IMR-90 (cell line): ENCODE measurements at regions of chr12 and their contacts with region 1.

Region 1: DNA sequence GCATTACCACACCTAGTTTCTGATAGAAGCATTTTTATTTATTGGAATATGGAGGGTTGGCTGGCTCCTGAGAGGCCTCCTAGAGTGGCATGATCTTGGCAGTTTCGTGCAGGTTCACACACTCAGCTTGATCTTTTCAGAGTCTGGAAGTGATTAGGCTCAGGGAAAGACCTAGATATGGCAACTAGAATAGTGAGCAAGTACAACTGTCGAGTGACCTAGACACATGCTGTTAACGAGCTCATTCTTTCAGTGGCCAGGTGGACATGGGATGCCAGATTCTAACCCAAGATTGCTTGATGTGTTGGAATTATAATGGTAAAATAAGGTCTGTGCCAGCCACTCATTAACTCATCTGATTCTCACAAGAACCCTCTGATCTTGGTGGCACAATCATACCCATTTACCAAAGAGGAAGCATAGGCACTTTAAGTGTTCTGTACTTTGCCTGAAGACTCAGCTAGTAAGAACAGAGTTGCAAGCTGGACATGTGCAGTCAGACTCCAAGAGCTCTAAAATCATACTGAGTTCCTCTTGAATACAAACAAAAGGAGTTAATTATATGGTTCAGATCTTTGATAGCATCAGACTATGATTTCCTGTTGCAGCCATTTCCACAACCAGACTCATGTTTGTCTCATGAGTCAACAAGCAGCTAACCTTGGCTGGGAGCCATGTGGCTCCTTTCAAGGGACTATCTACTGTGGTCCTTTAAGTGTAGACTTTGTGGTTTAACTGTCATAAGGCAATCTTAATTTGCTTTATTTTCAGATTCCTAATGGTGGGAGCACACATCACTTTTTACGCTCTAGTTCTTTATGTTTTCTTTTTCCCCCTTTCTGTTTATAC is 144.2 kb downstream of the PLEKHA5 start:
- DNase-seq: peak; percentile 97
- ATAC-seq: peak; percentile 91
- H3K4me3 ChIP-seq: no peak overlapping the region
- H3K27ac ChIP-seq: peak overlapping the region; percentile 13
- H3K4me1 ChIP-seq: peaks cover 5% of the 10 kb centered on the region; the same call in 1 of the 2 replicates
- H3K27me3 ChIP-seq: no peaks in the 10 kb centered on the region
- CTCF ChIP-seq: no peak
- POLR2A ChIP-seq: no peak
- RAD21 ChIP-seq: no peak

Region 2: DNA sequence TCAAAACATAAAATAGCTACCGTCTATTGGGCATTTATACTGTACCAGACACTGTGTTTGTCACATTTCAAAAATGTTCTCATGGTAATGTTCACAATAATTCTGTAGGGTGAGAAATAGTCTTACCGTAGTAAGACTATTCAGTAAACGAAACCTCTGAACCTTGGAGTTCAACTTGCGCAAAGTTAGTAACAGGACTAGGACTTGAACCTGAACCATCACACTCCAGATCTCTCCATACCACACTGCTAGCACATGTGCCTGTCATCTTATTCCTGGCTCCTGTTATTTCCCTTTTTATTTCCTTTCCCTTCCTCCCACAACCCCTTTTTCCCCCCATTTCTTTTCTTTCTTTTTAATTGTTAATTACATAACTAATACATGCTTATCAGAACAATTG is 78.7 kb before region 1 on chr12:
- CTCF ChIA-PET with region 1: interaction called, 13 read pairs
- POLR2A ChIA-PET with region 1: no interaction called
- dilution Hi-C with region 1: no loop called
- in situ Hi-C with region 1: no loop called
- intact Hi-C with region 1: no loop called
- DNase-seq: no peak
- ATAC-seq: no peak
- H3K4me3 ChIP-seq: no peak overlapping the region
- H3K27ac ChIP-seq: no peak overlapping the region
- H3K4me1 ChIP-seq: peaks cover 12% of the 10 kb centered on the region
- H3K27me3 ChIP-seq: no peaks in the 10 kb centered on the region
- CTCF ChIP-seq: no peak
- POLR2A ChIP-seq: no peak
- RAD21 ChIP-seq: no peak

Region 3: GRCh38 chr12:19223018-19223417 is 50.7 kb before region 1 on chr12:
- CTCF ChIA-PET with region 1: no interaction called
- POLR2A ChIA-PET with region 1: no interaction called
- dilution Hi-C with region 1: no loop called
- in situ Hi-C with region 1: no loop called
- intact Hi-C with region 1: loop called (anchors 5 kb)
- DNase-seq: no peak
- ATAC-seq: no peak
- H3K4me3 ChIP-seq: no peak overlapping the region
- H3K27ac ChIP-seq: peak overlapping the region; percentile 73; the same call in 1 of the 2 replicates
- H3K4me1 ChIP-seq: peaks cover 14% of the 10 kb centered on the region
- H3K27me3 ChIP-seq: no peaks in the 10 kb centered on the region
- CTCF ChIP-seq: 0 out of 2 replicates have a peak, but pooled peaks have one; percentile 9
- POLR2A ChIP-seq: no peak
- RAD21 ChIP-seq: 0 out of 2 replicates have a peak, but pooled peaks have one; percentile 17

Region 4: GRCh38 chr12:19332196-19332595 is 58.5 kb after region 1 on chr12:
- CTCF ChIA-PET with region 1: no interaction called
- POLR2A ChIA-PET with region 1: no interaction called
- dilution Hi-C with region 1: no loop called
- in situ Hi-C with region 1: no loop called
- intact Hi-C with region 1: no loop called
- DNase-seq: no peak
- ATAC-seq: no peak
- H3K4me3 ChIP-seq: no peak overlapping the region
- H3K27ac ChIP-seq: no peak overlapping the region
- H3K4me1 ChIP-seq: no peaks in the 10 kb centered on the region
- H3K27me3 ChIP-seq: no peaks in the 10 kb centered on the region
- CTCF ChIP-seq: no peak
- POLR2A ChIP-seq: no peak
- RAD21 ChIP-seq: no peak

Region 5: GRCh38 chr12:19726122-19726521 is 452.4 kb after region 1 on chr12:
- CTCF ChIA-PET with region 1: no interaction called
- POLR2A ChIA-PET with region 1: no interaction called
- dilution Hi-C with region 1: no loop called
- in situ Hi-C with region 1: no loop called
- intact Hi-C with region 1: no loop called
- DNase-seq: no peak
- ATAC-seq: no peak
- H3K4me3 ChIP-seq: no peak overlapping the region
- H3K27ac ChIP-seq: no peak overlapping the region
- H3K4me1 ChIP-seq: peaks cover 3% of the 10 kb centered on the region; the same call in 1 of the 2 replicates
- H3K27me3 ChIP-seq: no peaks in the 10 kb centered on the region
- CTCF ChIP-seq: no peak
- POLR2A ChIP-seq: no peak
- RAD21 ChIP-seq: no peak